ENCODE measurements at regions of chr3 and their contacts with region 1.

Region 1: GRCh38 chr3:128969993-128970739 is 23.7 kb downstream of the CFAP92 start:
- DNase-seq: peak; percentile 30 to 80 (median 68)
- ATAC-seq: peak; percentile 89
- H3K4me3 ChIP-seq: no peak overlapping the region
- H3K4me3 Mint-ChIP-seq: no peak overlapping the region
- H3K27ac ChIP-seq: no peak overlapping the region
- H3K27ac Mint-ChIP-seq: no peak overlapping the region
- H3K4me1 ChIP-seq: peaks cover 6% of the 10 kb centered on the region
- H3K4me1 Mint-ChIP-seq: peaks cover 7% of the 10 kb centered on the region
- H3K27me3 ChIP-seq: peaks cover 0 to 2% of the 10 kb centered on the region in 2 experiments
- H3K27me3 Mint-ChIP-seq: no peaks in the 10 kb centered on the region
- CTCF ChIP-seq: peak; percentile 96

Region 2: DNA sequence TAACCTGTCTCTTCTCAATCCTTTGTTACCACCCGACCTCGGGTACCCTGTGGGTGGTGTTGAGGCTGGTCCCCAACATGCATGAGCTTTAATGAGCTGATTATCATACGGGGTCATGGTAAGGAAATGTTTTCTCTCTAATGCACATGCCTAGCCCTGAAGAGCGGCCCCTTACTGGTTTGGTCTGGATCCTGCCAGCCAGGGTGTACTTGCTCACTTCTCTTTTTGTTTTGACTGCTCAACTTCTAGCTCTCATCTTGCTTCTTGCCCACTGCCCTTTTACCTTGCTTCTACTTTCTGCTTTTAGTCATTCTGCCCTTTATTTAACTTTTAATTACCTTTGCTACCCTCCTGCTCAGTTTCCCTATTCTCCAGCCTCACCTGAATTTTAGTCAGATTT is 135.1 kb before region 1 on chr3:
- CTCF ChIA-PET with region 1: no interaction called
- POLR2A ChIA-PET with region 1: no interaction called
- intact Hi-C with region 1: no loop called
- DNase-seq: no peak
- ATAC-seq: no peak
- H3K4me3 ChIP-seq: no peak overlapping the region
- H3K4me3 Mint-ChIP-seq: no peak overlapping the region
- H3K27ac ChIP-seq: no peak overlapping the region
- H3K27ac Mint-ChIP-seq: no peak overlapping the region
- H3K4me1 ChIP-seq: no peaks in the 10 kb centered on the region
- H3K4me1 Mint-ChIP-seq: no peaks in the 10 kb centered on the region
- H3K27me3 ChIP-seq: no peaks in the 10 kb centered on the region
- H3K27me3 Mint-ChIP-seq: peaks cover 2% of the 10 kb centered on the region
- CTCF ChIP-seq: no peak

Region 3: GRCh38 chr3:128983293-128984069 is 13.3 kb after region 1 on chr3:
- CTCF ChIA-PET with region 1: interaction called, 36 read pairs
- POLR2A ChIA-PET with region 1: no interaction called
- intact Hi-C with region 1: no loop called
- DNase-seq: no peak
- ATAC-seq: no peak
- H3K4me3 ChIP-seq: no peak overlapping the region
- H3K4me3 Mint-ChIP-seq: no peak overlapping the region
- H3K27ac ChIP-seq: no peak overlapping the region
- H3K27ac Mint-ChIP-seq: no peak overlapping the region
- H3K4me1 ChIP-seq: no peaks in the 10 kb centered on the region
- H3K4me1 Mint-ChIP-seq: no peaks in the 10 kb centered on the region
- H3K27me3 ChIP-seq: no peaks in the 10 kb centered on the region
- H3K27me3 Mint-ChIP-seq: no peaks in the 10 kb centered on the region
- CTCF ChIP-seq: no peak

Region 4: DNA sequence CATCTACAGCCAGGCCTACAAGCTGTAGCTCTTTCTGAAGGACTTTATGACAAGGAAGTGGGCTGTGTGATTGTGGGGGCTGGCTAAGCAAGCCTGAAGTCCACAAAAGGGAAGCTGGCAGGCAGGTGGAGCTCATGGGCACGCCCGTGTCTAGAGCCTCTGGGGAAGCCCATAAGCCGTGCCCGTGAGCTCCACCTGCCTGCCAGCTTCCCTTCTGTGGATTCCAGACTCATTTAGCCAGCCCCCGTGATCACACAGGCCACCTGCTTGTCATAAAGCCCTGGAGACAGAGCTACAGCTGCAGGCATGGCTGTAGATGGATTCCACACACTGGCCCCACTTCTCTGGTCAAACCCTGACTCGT is 46.2 kb after region 1 on chr3:
- CTCF ChIA-PET with region 1: interaction called, 183 read pairs
- POLR2A ChIA-PET with region 1: interaction called, 17 read pairs
- intact Hi-C with region 1: loop called (anchors 1 kb)
- DNase-seq: peak in 8 of 9 experiments; percentile 48 to 91 (median 74)
- ATAC-seq: peak; percentile 86
- H3K4me3 ChIP-seq: peak overlapping the region; percentile 40 to 41
- H3K4me3 Mint-ChIP-seq: peak overlapping the region; percentile 73
- H3K27ac ChIP-seq: peak overlapping the region; percentile 49 to 87
- H3K27ac Mint-ChIP-seq: peak overlapping the region; percentile 92
- H3K4me1 ChIP-seq: peaks cover 41% of the 10 kb centered on the region
- H3K4me1 Mint-ChIP-seq: peaks cover 44% of the 10 kb centered on the region
- H3K27me3 ChIP-seq: no peaks in the 10 kb centered on the region
- H3K27me3 Mint-ChIP-seq: no peaks in the 10 kb centered on the region
- CTCF ChIP-seq: peak; percentile 38

Region 5: DNA sequence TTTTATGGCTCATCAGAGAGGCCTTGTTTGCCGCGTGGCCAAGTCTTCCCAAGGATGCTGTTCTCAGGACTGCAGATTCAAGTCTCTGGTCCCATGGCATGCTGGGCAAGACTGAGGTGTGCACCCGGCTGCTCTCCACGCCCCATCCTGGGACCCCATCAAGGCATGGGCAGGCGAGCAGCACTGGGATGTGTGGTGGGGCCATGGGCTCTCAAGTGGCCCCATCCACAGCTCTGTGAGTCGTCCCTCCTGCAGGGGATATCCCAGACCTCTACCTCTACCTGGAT is 77.3 kb after region 1 on chr3:
- CTCF ChIA-PET with region 1: interaction called, 79 read pairs
- POLR2A ChIA-PET with region 1: no interaction called
- intact Hi-C with region 1: no loop called
- DNase-seq: no peak
- ATAC-seq: no peak
- H3K4me3 ChIP-seq: no peak overlapping the region
- H3K4me3 Mint-ChIP-seq: no peak overlapping the region
- H3K27ac ChIP-seq: no peak overlapping the region
- H3K27ac Mint-ChIP-seq: no peak overlapping the region
- H3K4me1 ChIP-seq: peaks cover 8% of the 10 kb centered on the region
- H3K4me1 Mint-ChIP-seq: peaks cover 2% of the 10 kb centered on the region
- H3K27me3 ChIP-seq: peaks cover 0 to 3% of the 10 kb centered on the region in 2 experiments
- H3K27me3 Mint-ChIP-seq: peaks cover 7% of the 10 kb centered on the region
- CTCF ChIP-seq: no peak

Region 6: DNA sequence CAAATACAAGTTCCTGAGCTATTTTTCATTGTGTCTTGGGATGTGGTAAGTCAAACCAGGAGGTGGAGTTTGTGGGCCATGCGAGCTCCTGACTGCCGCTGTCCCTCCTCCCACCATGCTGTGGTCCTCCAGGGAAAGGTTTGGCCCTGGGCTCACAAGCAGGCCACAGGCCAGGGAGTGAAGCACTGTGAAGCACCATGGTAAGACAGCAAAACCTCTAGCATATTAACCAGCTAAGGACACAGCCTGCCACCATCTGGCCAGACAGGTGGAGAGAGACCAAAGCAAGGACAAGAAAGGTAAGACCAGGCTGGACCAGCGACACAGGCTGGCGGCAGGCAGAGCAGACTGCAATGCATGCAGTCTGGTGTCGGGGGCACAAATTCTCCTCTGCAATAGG is 136.2 kb after region 1 on chr3:
- CTCF ChIA-PET with region 1: interaction called, 17 read pairs
- POLR2A ChIA-PET with region 1: interaction called, 3 read pairs
- intact Hi-C with region 1: loop called in 1 of 2 experiments (anchors 10 kb)
- DNase-seq: peak in 1 of 9 experiments; percentile 5
- ATAC-seq: no peak
- H3K4me3 ChIP-seq: no peak overlapping the region
- H3K4me3 Mint-ChIP-seq: no peak overlapping the region
- H3K27ac ChIP-seq: no peak overlapping the region
- H3K27ac Mint-ChIP-seq: peak overlapping the region; percentile 82
- H3K4me1 ChIP-seq: peaks cover 76% of the 10 kb centered on the region
- H3K4me1 Mint-ChIP-seq: peaks cover 80% of the 10 kb centered on the region
- H3K27me3 ChIP-seq: no peaks in the 10 kb centered on the region
- H3K27me3 Mint-ChIP-seq: no peaks in the 10 kb centered on the region
- CTCF ChIP-seq: no peak

Region 7: DNA sequence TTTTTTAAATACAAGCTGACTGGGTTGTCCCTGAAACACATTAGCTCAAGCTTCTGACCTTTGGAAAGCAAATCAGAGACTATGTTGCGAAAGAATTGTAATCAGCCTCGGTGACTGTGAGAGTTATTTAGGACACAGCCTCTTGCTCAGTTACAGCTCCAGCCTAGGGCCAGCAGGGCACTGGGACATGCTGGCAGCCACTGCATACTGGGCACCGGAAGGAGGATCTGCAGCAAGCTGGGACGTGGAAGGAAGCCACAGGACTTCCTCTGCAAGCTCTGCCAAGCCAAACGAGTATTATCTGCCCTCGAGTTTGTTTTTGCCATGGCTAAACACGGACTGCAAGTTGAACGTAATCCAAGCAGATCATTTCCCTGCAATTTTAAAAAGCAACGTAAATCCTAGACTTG is 254.8 kb after region 1 on chr3:
- CTCF ChIA-PET with region 1: interaction called, 17 read pairs
- POLR2A ChIA-PET with region 1: no interaction called
- intact Hi-C with region 1: no loop called
- DNase-seq: peak in 2 of 9 experiments; percentile 8 to 27
- ATAC-seq: no peak
- H3K4me3 ChIP-seq: no peak overlapping the region
- H3K4me3 Mint-ChIP-seq: peak overlapping the region; percentile 49
- H3K27ac ChIP-seq: peak overlapping the region in 1 of 2 experiments; percentile 12
- H3K27ac Mint-ChIP-seq: peak overlapping the region; percentile 76
- H3K4me1 ChIP-seq: peaks cover 12% of the 10 kb centered on the region
- H3K4me1 Mint-ChIP-seq: peaks cover 14% of the 10 kb centered on the region
- H3K27me3 ChIP-seq: no peaks in the 10 kb centered on the region
- H3K27me3 Mint-ChIP-seq: no peaks in the 10 kb centered on the region
- CTCF ChIP-seq: no peak

Measured in CD8-positive, alpha-beta T cell (primary cell).